ENCODE measurements at regions of chr6 and their contacts with region 1.

Region 1: GRCh38 chr6:116648156-116648555 is 20.4 kb downstream of the ZUP1 start:
- DNase-seq: no peak
- H3K4me3 ChIP-seq: no peak overlapping the region
- H3K4me3 Mint-ChIP-seq: no peak overlapping the region
- H3K27ac Mint-ChIP-seq: no peak overlapping the region
- H3K4me1 ChIP-seq: no peaks in the 10 kb centered on the region
- H3K4me1 Mint-ChIP-seq: no peaks in the 10 kb centered on the region
- H3K27me3 ChIP-seq: no peaks in the 10 kb centered on the region
- H3K27me3 Mint-ChIP-seq: no peaks in the 10 kb centered on the region
- CTCF ChIP-seq: no peak

Region 2: GRCh38 chr6:116287689-116288282 is 360.4 kb before region 1 on chr6:
- CTCF ChIA-PET with region 1: no interaction called
- POLR2A ChIA-PET with region 1: no interaction called
- intact Hi-C with region 1: loop called (anchors 5 kb)
- DNase-seq: peak in 1 of 2 experiments; percentile 17
- H3K4me3 ChIP-seq: no peak overlapping the region
- H3K4me3 Mint-ChIP-seq: no peak overlapping the region
- H3K27ac Mint-ChIP-seq: no peak overlapping the region
- H3K4me1 ChIP-seq: no peaks in the 10 kb centered on the region
- H3K4me1 Mint-ChIP-seq: no peaks in the 10 kb centered on the region
- H3K27me3 ChIP-seq: no peaks in the 10 kb centered on the region
- H3K27me3 Mint-ChIP-seq: no peaks in the 10 kb centered on the region
- CTCF ChIP-seq: peak; percentile 76 to 81

Region 3: GRCh38 chr6:116444092-116444491 is 204.1 kb before region 1 on chr6:
- CTCF ChIA-PET with region 1: no interaction called
- POLR2A ChIA-PET with region 1: no interaction called
- intact Hi-C with region 1: loop called (anchors 10 kb)
- DNase-seq: no peak
- H3K4me3 ChIP-seq: no peak overlapping the region
- H3K4me3 Mint-ChIP-seq: no peak overlapping the region
- H3K27ac Mint-ChIP-seq: no peak overlapping the region
- H3K4me1 ChIP-seq: no peaks in the 10 kb centered on the region
- H3K4me1 Mint-ChIP-seq: no peaks in the 10 kb centered on the region
- H3K27me3 ChIP-seq: no peaks in the 10 kb centered on the region; the same call in 1 of the 2 replicates
- H3K27me3 Mint-ChIP-seq: peaks cover 16% of the 10 kb centered on the region
- CTCF ChIP-seq: peak; percentile 44 to 48

Region 4: DNA sequence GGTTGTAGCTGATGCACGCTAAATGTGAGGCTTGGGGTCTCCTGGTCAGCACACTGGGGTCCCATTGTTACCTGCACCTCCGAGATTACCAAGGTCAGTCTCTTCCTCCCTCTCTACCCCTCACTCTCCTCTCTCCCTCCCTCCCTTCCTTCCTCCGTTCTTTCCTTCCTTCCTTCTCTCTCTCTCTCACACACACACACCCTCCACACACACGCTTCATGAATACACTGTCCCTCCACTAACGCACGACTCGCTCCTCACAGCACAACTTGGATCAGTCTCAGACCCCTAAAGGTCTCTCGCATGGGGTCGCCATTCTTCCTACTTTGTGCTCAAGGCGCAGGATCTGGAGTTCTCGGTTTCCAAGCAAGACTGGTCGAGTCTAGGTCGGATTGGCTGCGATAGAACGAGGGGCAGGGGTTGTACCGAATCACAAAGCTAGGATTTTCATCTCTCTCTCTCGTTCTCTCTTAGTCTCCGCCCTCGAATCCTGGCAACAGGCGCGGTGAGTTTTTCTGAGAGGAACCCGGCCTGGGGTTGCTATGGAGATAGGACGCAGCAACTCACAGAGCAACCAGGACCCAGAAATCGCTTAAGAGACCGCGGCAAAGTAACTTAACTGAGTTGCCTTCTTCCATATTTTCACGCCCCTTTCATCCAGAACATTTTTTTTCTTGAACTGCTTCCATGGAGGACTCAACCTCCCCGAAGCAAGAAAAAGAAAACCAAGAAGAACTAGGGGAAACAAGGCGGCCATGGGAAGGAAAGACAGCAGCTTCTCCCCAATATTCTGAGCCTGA is 32.0 kb before region 1 on chr6 and contains the start of gene RSPH4A:
- CTCF ChIA-PET with region 1: no interaction called
- POLR2A ChIA-PET with region 1: no interaction called
- intact Hi-C with region 1: loop called (anchors 1 kb)
- DNase-seq: peak; percentile 88 to 89
- H3K4me3 ChIP-seq: peak within 1 kb of the TSS; percentile 49
- H3K4me3 Mint-ChIP-seq: peak within 1 kb of the TSS; percentile 77
- H3K27ac Mint-ChIP-seq: peak within 1 kb of the TSS; percentile 70
- H3K4me1 ChIP-seq: peaks cover 4% of the 10 kb centered on the region; the same call in 1 of the 2 replicates
- H3K4me1 Mint-ChIP-seq: peaks cover 7% of the 10 kb centered on the region
- H3K27me3 ChIP-seq: no peaks in the 10 kb centered on the region
- H3K27me3 Mint-ChIP-seq: peaks cover 4% of the 10 kb centered on the region
- CTCF ChIP-seq: no peak
- total RNA-seq, gene RSPH4A: 0.20 and 0.23 TPM in 2 replicates

Region 5: DNA sequence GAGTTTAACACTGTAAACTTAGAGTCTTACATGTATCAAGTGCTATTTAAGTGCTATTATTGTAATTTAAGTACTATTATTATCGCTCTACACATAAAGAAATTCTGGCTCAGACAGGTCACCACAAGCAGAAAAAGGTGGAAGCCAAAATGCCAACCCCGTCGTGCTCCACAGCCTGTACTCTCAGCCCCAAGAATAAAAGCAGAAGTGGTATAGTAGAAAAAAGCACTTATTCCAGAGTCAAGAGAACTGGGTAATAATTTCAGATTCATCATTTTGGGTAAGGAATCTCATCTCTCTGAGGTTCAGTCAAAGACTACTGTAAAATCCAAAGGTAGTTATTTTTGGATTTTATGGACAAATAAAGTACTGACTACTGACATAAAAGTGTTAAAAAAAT is 19.5 kb after region 1 on chr6:
- CTCF ChIA-PET with region 1: interaction called, 10 read pairs
- POLR2A ChIA-PET with region 1: no interaction called
- intact Hi-C with region 1: no loop called
- DNase-seq: no peak
- H3K4me3 ChIP-seq: peak overlapping the region; percentile 50
- H3K4me3 Mint-ChIP-seq: peak overlapping the region; percentile 99
- H3K27ac Mint-ChIP-seq: peak overlapping the region; percentile 95
- H3K4me1 ChIP-seq: peaks cover 8% of the 10 kb centered on the region
- H3K4me1 Mint-ChIP-seq: no peaks in the 10 kb centered on the region
- H3K27me3 ChIP-seq: no peaks in the 10 kb centered on the region
- H3K27me3 Mint-ChIP-seq: peaks cover 2% of the 10 kb centered on the region
- CTCF ChIP-seq: no peak

Region 6: DNA sequence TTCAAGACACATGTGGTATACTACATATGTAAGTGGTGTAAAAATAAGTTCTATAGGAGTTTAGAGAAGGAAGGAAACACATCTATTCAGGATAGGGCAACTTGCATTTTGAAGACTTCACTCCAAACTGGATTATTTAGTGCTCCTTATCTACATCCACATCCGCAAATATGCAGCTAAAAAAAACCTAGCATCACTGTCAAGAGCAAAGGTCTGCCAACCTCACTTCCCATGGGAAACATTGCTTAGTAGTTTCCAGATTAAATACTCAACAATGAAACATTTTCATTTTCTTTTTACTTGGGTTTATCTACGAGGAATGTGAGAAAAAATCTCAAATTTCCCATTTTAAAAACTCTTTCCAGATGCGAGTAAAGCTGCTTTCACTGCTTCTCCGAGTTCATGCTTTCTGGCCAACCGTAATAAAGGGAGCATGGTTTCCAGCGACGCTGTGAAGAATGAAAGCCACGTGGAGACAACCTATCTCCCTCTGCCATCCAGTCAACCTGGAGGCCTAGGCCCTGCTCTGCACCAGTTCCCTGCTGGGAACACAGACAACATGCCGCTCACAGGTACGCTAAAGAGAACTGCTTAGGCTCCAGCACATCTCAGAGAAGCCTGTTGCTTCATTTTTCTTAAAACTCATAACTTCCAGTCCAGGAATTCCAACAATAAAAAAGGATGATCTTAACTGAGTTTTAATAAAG is 277.1 kb after region 1 on chr6:
- CTCF ChIA-PET with region 1: no interaction called
- POLR2A ChIA-PET with region 1: no interaction called
- intact Hi-C with region 1: no loop called
- DNase-seq: no peak
- H3K4me3 ChIP-seq: no peak overlapping the region
- H3K4me3 Mint-ChIP-seq: no peak overlapping the region
- H3K27ac Mint-ChIP-seq: no peak overlapping the region
- H3K4me1 ChIP-seq: peaks cover 33% of the 10 kb centered on the region
- H3K4me1 Mint-ChIP-seq: peaks cover 21% of the 10 kb centered on the region
- H3K27me3 ChIP-seq: no peaks in the 10 kb centered on the region
- H3K27me3 Mint-ChIP-seq: no peaks in the 10 kb centered on the region
- CTCF ChIP-seq: no peak